GM12878 (cell line): ENCODE measurements at regions of chr14 and their contacts with region 1.

Region 1: DNA sequence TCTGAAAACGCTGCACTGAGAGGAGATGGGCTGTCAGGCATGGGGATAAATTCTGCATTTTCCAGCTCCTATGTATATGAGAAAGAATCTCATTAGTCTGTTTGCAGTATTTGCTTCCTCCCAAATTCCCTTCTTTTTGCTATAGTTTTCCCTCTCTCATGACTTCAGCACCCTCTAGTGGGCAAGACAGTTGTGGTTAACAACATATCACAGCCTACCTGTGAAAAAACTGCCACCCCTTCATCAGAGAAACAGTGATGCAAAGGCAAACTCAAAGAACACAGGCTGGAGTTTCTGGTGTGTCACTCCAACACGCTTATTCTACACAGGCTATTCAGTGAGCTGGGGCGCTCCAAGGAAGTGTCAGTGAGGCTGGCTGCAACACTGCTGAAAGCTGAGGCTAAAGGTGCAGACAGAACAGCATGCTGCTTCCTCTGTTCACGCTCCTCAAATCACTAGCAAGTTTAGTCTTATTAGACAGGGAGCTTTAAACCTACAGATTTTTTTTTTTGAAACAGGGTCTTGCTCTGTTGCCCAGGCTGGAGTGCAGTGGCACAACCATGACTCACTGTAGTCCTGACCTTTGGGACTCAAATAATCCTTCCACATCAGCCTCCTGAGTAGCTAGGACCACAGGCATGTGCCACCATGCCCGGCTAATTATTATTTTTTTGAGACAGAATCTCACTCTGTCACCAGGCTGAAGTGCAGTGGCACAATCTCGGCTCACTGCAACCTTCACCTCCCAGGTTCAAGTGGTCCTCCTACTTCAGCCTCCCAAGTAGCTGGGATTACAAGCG is 19.3 kb downstream of the ZC2HC1C start:
- DNase-seq: no peak
- ATAC-seq: peak; percentile 82
- H3K4me3 ChIP-seq: no peak overlapping the region
- H3K27ac ChIP-seq: no peak overlapping the region
- H3K4me1 ChIP-seq: no peaks in the 10 kb centered on the region
- H3K27me3 ChIP-seq: no peaks in the 10 kb centered on the region
- CTCF ChIP-seq: peak; percentile 64 to 83 (median 68)
- EP300 ChIP-seq: no peak
- POLR2A ChIP-seq: no peak
- RAD21 ChIP-seq: peak; percentile 91

Region 2: GRCh38 chr14:74860906-74861733 is 227.7 kb before region 1 on chr14:
- CTCF ChIA-PET with region 1: interaction called, 125 read pairs
- POLR2A ChIA-PET with region 1: no interaction called
- RAD21 ChIA-PET with region 1: interaction called, 30 read pairs
- SMC1A ChIA-PET with region 1: interaction called, 39 read pairs
- in situ Hi-C with region 1: no loop called
- intact Hi-C with region 1: loop called (anchors 1 kb)
- DNase-seq: no peak
- ATAC-seq: peak; percentile 97
- H3K4me3 ChIP-seq: no peak overlapping the region
- H3K27ac ChIP-seq: no peak overlapping the region
- H3K4me1 ChIP-seq: no peaks in the 10 kb centered on the region
- H3K27me3 ChIP-seq: no peaks in the 10 kb centered on the region
- CTCF ChIP-seq: peak; percentile 82 to 94 (median 88)
- EP300 ChIP-seq: no peak
- POLR2A ChIP-seq: no peak
- RAD21 ChIP-seq: peak; percentile 93

Region 3: DNA sequence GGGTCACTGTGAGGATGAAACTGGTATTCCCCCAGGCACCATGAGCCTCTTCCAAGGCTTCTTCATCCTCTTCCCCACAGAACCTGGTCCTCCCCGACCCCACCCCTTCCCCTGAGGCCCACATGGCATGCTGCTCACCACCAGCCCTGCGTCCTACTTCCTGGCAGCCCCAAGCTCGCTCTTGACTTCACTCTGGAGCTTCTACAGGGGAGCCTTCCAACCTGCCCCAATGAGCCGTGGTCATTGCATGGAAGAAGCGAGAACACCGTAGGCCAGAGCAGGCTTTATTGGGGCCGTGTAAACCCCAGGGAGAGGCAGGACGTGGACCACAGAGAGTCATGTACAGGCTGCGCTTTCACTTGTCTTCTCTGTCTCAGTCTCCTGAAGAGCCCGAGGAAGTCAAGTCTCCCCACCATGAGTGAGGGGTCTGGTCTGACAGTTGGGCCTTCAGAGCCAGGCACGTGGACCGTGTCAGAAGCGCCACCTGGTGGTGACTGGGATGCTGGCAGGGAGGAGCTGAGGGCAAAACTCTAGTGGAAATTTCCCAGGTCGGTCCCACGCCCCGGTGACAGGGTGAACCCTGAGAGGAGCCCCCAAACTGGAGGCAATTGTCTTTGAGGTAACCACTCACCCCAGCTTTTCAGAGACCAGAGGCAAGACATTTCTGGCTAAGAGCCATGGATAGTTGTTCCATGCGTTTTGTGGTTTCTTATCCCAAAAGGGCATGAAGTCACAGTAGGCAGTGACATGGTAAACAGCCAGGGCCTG is 183.2 kb before region 1 on chr14:
- CTCF ChIA-PET with region 1: interaction called, 30 read pairs
- POLR2A ChIA-PET with region 1: interaction called, 3 read pairs
- RAD21 ChIA-PET with region 1: interaction called, 6 read pairs
- SMC1A ChIA-PET with region 1: interaction called, 5 read pairs
- in situ Hi-C with region 1: no loop called
- intact Hi-C with region 1: no loop called
- DNase-seq: no peak
- ATAC-seq: peak; percentile 87
- H3K4me3 ChIP-seq: no peak overlapping the region
- H3K27ac ChIP-seq: no peak overlapping the region
- H3K4me1 ChIP-seq: peaks cover 4% of the 10 kb centered on the region; the same call in 1 of the 2 replicates
- H3K27me3 ChIP-seq: no peaks in the 10 kb centered on the region
- CTCF ChIP-seq: peak; percentile 88 to 96 (median 94)
- EP300 ChIP-seq: no peak
- POLR2A ChIP-seq: peak; percentile 66; the same call in 1 of the 2 replicates
- RAD21 ChIP-seq: peak; percentile 82

Region 4: DNA sequence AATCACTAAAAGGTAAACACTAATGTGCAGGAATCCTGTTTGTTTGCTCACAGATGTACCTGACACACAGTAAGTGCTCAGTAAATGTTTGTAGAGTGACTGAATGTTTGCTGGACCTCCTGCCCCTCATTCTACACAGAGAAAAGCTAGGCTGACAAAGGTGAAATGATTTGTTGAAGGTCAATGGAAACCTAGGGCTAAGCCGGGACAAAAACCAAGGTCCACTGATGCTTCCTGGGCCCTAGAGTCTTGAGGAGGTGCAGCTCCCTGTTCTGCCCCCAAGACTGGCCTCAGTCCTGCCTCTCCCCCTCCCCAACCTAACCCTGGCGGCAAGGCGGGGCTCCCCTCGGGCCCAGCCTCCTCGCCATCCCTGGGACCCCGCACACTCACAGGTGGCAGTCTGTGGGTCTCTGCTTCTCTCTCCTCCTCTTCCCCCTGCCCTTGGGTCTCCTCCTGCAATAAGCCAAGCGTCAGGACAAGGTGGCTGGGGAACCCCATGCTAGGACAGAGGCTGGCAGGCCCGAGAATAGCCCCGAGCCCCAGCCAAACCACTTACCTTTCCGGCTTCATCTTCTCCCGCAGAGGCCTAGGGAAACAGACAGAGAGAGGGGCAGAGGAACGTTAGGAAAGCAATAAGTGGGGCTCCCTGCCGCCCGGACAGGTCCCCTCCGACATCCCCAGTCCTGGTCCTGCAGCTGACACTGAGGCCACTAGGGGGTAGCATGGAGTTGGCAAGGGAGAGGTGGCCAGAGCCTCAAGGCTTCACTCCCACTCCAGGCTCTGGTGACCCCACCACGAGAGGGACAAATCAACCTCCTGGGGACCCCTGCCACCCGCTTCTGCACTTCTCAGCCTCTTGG is 142.7 kb before region 1 on chr14:
- CTCF ChIA-PET with region 1: interaction called, 129 read pairs
- POLR2A ChIA-PET with region 1: interaction called, 3 read pairs
- RAD21 ChIA-PET with region 1: interaction called, 17 read pairs
- SMC1A ChIA-PET with region 1: interaction called, 32 read pairs
- in situ Hi-C with region 1: no loop called
- intact Hi-C with region 1: loop called (anchors 1 kb)
- DNase-seq: no peak
- ATAC-seq: peak; percentile 84
- H3K4me3 ChIP-seq: no peak overlapping the region
- H3K27ac ChIP-seq: no peak overlapping the region
- H3K4me1 ChIP-seq: peaks cover 23% of the 10 kb centered on the region
- H3K27me3 ChIP-seq: no peaks in the 10 kb centered on the region
- CTCF ChIP-seq: peak; percentile 90 to 96 (median 94)
- EP300 ChIP-seq: no peak
- POLR2A ChIP-seq: no peak
- RAD21 ChIP-seq: peak; percentile 87

Region 5: GRCh38 chr14:75022655-75023054 is 66.1 kb before region 1 on chr14:
- CTCF ChIA-PET with region 1: interaction called, 10 read pairs
- POLR2A ChIA-PET with region 1: no interaction called
- RAD21 ChIA-PET with region 1: interaction called, 4 read pairs
- SMC1A ChIA-PET with region 1: no interaction called
- in situ Hi-C with region 1: no loop called
- intact Hi-C with region 1: no loop called
- DNase-seq: no peak
- ATAC-seq: peak; percentile 65
- H3K4me3 ChIP-seq: no peak overlapping the region
- H3K27ac ChIP-seq: no peak overlapping the region
- H3K4me1 ChIP-seq: no peaks in the 10 kb centered on the region
- H3K27me3 ChIP-seq: no peaks in the 10 kb centered on the region
- CTCF ChIP-seq: peak; percentile 16 to 50 (median 26); a peak in 3 of 6 replicates
- EP300 ChIP-seq: no peak
- POLR2A ChIP-seq: no peak
- RAD21 ChIP-seq: peak; percentile 26; the same call in 1 of the 2 replicates

Region 6: DNA sequence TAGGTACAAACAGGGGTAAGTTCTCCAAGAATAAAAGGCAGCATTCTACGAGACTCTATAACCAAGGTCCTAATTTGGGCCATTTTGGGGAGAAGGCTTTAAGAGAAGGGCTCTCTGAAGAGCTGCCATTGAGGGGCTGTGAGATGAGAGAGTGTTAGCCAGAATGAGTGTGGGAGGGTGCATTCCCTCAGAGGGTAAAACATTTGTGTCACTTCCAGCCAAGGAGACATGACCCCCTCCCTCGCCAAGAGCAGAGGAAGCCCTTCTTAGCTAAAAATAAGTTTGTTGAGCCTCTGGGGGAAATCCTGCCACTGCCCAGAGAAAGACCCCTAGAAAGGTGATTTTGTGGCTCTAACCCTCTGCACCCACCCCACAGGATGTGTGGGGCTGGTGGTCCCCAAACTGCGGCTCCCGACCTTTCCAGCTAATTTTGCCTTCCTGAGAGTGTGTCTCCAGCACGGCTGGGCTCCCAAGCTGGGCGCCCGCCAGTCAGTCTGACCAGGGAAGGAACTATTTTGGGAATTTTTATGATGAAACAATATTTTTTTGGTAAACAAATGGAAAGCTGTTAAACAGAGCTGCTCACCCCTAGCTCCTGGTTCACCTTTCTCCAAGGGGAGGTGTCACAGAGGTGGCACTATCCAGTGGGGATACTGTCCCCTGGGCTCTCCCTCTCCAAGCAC is 273.1 kb after region 1 on chr14:
- CTCF ChIA-PET with region 1: no interaction called
- POLR2A ChIA-PET with region 1: no interaction called
- RAD21 ChIA-PET with region 1: no interaction called
- SMC1A ChIA-PET with region 1: no interaction called
- in situ Hi-C with region 1: no loop called
- intact Hi-C with region 1: no loop called
- DNase-seq: no peak
- ATAC-seq: no peak
- H3K4me3 ChIP-seq: no peak overlapping the region
- H3K27ac ChIP-seq: no peak overlapping the region
- H3K4me1 ChIP-seq: 0 out of 2 replicates have a peak, but pooled peaks cover 3% of the 10 kb centered on the region
- H3K27me3 ChIP-seq: no peaks in the 10 kb centered on the region
- CTCF ChIP-seq: no peak
- EP300 ChIP-seq: no peak
- POLR2A ChIP-seq: no peak
- RAD21 ChIP-seq: no peak